GM12878 (cell line): ENCODE measurements at regions of chr14 and their contacts with region 1.

Region 1: GRCh38 chr14:75906676-75907280 is 75.0 kb downstream of the TGFB3 start:
- DNase-seq: no peak
- ATAC-seq: peak; percentile 73
- H3K4me3 ChIP-seq: no peak overlapping the region
- H3K27ac ChIP-seq: no peak overlapping the region
- H3K4me1 ChIP-seq: no peaks in the 10 kb centered on the region
- H3K27me3 ChIP-seq: no peaks in the 10 kb centered on the region
- CTCF ChIP-seq: peak; percentile 69 to 78 (median 71)
- EP300 ChIP-seq: no peak
- POLR2A ChIP-seq: no peak
- RAD21 ChIP-seq: peak; percentile 85

Region 2: GRCh38 chr14:75794615-75795038 is 112.2 kb before region 1 on chr14:
- CTCF ChIA-PET with region 1: interaction called, 18 read pairs
- POLR2A ChIA-PET with region 1: no interaction called
- RAD21 ChIA-PET with region 1: no interaction called
- SMC1A ChIA-PET with region 1: interaction called, 11 read pairs
- in situ Hi-C with region 1: no loop called
- intact Hi-C with region 1: no loop called
- DNase-seq: no peak
- ATAC-seq: peak; percentile 40; the same call in 2 of the 3 replicates
- H3K4me3 ChIP-seq: no peak overlapping the region
- H3K27ac ChIP-seq: no peak overlapping the region
- H3K4me1 ChIP-seq: no peaks in the 10 kb centered on the region
- H3K27me3 ChIP-seq: no peaks in the 10 kb centered on the region
- CTCF ChIP-seq: peak in 2 of 3 experiments; percentile 17 to 37; a peak in 2 of 6 replicates
- EP300 ChIP-seq: no peak
- POLR2A ChIP-seq: no peak
- RAD21 ChIP-seq: no peak

Region 3: DNA sequence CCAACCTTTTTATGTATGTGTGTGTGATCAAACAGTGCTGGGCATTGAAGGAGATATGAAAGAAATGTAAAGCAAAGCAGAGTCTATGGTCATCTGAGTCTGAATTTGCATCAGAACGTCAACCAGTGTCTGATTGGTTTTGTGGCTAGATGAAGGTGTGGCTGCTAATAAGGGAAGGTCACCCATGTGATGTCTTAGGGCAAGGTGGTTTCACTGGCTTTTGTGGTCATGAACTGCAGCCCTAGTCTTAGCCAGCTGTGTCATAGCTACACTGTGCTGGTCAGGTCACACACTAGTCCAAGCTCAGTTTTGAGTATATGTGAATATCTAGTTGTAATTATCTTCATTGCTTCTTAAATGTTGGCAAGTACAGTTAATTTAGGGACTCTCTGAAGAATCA is 30.8 kb before region 1 on chr14:
- CTCF ChIA-PET with region 1: interaction called, 16 read pairs
- POLR2A ChIA-PET with region 1: no interaction called
- RAD21 ChIA-PET with region 1: interaction called, 4 read pairs
- SMC1A ChIA-PET with region 1: interaction called, 4 read pairs
- in situ Hi-C with region 1: no loop called
- intact Hi-C with region 1: no loop called
- DNase-seq: peak; percentile 80
- ATAC-seq: peak; percentile 100
- H3K4me3 ChIP-seq: no peak overlapping the region
- H3K27ac ChIP-seq: no peak overlapping the region
- H3K4me1 ChIP-seq: no peaks in the 10 kb centered on the region; the same call in 1 of the 2 replicates
- H3K27me3 ChIP-seq: no peaks in the 10 kb centered on the region
- CTCF ChIP-seq: no peak
- EP300 ChIP-seq: peak in 1 of 2 experiments; percentile 68; a peak in 2 of 4 replicates
- POLR2A ChIP-seq: no peak
- RAD21 ChIP-seq: no peak

Region 4: GRCh38 chr14:75968456-75968855 is 61.7 kb after region 1 on chr14:
- CTCF ChIA-PET with region 1: interaction called, 390 read pairs
- POLR2A ChIA-PET with region 1: no interaction called
- RAD21 ChIA-PET with region 1: interaction called, 5 read pairs
- SMC1A ChIA-PET with region 1: interaction called, 190 read pairs
- in situ Hi-C with region 1: no loop called
- intact Hi-C with region 1: no loop called
- DNase-seq: no peak
- ATAC-seq: no peak
- H3K4me3 ChIP-seq: no peak overlapping the region
- H3K27ac ChIP-seq: no peak overlapping the region
- H3K4me1 ChIP-seq: peaks cover 6% of the 10 kb centered on the region; the same call in 1 of the 2 replicates
- H3K27me3 ChIP-seq: no peaks in the 10 kb centered on the region
- CTCF ChIP-seq: no peak
- EP300 ChIP-seq: no peak
- POLR2A ChIP-seq: no peak
- RAD21 ChIP-seq: no peak

Region 5: DNA sequence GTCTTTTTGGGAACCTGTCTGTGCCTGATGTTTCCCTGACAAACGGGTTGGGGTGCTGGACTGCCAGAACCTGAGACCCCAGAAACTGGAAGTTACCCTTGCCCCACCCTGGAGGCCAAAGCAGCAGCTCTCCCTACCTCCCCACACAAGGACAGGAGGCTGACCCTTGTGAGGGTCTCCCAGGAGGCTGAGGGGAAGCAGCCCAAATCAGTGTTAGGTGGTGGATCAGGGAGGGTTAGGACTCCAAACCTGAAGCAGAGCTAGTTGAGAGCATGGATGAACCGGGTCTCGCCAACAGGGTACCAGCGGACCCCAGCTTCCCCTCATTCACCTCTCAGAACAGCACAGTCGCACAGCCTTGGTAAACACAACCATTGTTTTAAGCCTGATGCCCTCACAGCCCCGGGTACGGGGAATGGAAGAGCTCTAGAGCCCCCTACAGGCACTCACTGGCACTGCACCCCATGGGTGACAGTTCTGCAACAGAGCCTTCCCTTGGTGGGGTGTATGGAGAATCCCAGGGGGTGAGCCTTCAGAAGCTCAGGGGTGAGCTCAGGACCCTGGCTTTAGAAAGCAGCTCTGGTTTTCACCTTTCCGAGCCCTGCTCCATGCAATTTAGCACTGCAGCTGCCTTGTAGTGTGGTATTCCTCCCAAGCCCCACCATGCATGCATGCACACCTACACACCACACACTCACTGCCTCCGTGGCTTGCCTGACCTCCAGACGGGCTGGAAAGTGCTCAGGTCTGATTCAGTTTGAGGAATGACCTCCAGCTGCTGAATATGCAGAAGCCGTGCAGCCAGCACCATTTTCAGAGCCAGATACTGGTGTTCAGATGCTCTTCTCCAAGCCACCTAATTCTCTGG is 480.4 kb after region 1 on chr14:
- CTCF ChIA-PET with region 1: interaction called, 23 read pairs
- POLR2A ChIA-PET with region 1: no interaction called
- RAD21 ChIA-PET with region 1: interaction called, 5 read pairs
- SMC1A ChIA-PET with region 1: interaction called, 4 read pairs
- in situ Hi-C with region 1: no loop called
- intact Hi-C with region 1: loop called (anchors 10 kb)
- DNase-seq: peak; percentile 7
- ATAC-seq: peak; percentile 99
- H3K4me3 ChIP-seq: no peak overlapping the region
- H3K27ac ChIP-seq: no peak overlapping the region
- H3K4me1 ChIP-seq: no peaks in the 10 kb centered on the region
- H3K27me3 ChIP-seq: no peaks in the 10 kb centered on the region
- CTCF ChIP-seq: peak; percentile 99
- EP300 ChIP-seq: no peak
- POLR2A ChIP-seq: no peak
- RAD21 ChIP-seq: peak; percentile 98

Region 6: GRCh38 chr14:76776666-76777251 is 870.0 kb after region 1 on chr14:
- CTCF ChIA-PET with region 1: no interaction called
- POLR2A ChIA-PET with region 1: no interaction called
- RAD21 ChIA-PET with region 1: no interaction called
- SMC1A ChIA-PET with region 1: no interaction called
- in situ Hi-C with region 1: no loop called
- intact Hi-C with region 1: no loop called
- DNase-seq: no peak
- ATAC-seq: peak; percentile 46
- H3K4me3 ChIP-seq: no peak overlapping the region
- H3K27ac ChIP-seq: no peak overlapping the region
- H3K4me1 ChIP-seq: peaks cover under 1% of the 10 kb centered on the region; the same call in 1 of the 2 replicates
- H3K27me3 ChIP-seq: no peaks in the 10 kb centered on the region
- CTCF ChIP-seq: 0 out of 6 replicates have a peak, but pooled peaks of 1 of the 3 experiments have one; percentile 4
- EP300 ChIP-seq: no peak
- POLR2A ChIP-seq: no peak
- RAD21 ChIP-seq: no peak